PC-9 (cell line): ENCODE measurements at regions of chr2 and their contacts with region 1.

Region 1: DNA sequence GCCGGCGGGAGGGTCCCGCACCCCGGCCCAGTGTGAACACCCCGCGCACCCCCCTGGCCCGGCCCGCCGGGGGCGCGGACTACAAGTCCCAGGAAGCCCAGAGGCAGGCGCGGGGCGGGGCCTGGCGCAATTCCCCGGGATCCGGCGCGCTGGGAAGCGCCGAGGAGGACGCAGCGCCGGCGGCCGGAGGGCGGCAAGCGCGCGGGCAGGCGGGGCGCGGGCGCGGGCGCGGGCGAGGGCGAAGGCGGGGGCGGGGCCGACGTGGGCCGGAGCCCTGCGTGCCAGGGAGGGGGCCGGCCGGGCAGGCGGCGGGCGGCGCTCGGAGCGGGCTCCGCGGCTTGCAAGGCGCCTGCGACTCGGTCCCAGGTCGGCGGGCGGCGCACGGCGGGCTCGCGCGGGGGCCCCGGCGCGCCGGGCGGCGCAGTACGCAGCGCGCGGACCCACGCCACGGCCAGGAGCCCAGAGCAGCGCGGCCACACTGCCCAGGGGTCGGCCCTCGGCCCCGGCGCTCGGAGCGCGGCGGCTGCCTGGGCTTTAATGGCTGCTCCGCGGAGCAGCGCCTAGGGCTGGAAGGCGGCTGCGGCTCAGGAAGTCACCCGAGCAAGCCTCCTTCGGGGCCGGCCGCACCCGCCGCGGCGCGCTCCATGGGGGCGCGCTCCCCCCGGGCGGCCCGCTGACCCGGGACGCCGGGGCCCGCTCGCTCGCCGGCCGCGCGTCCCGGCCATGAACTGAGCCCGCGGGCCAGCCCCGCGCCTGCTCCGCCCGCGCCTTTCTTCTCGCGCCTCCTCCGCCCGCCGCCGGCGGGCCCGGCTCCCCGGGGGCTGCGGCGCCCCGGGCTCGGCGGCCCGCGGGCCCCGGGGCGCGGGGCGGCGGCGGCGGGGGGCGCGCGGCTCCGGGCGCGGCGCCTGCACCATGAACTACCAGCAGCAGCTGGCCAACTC is at the start of gene AGAP1:
- DNase-seq: peak; percentile 75 to 97
- H3K4me3 ChIP-seq: peak within 1 kb of the TSS; percentile 77
- H3K27ac ChIP-seq: peak within 1 kb of the TSS; percentile 69
- H3K4me1 ChIP-seq: peaks cover 20% of the 10 kb centered on the region
- H3K27me3 ChIP-seq: no peaks in the 10 kb centered on the region
- CTCF ChIP-seq: no peak
- total RNA-seq, gene AGAP1: 91.4 and 107 TPM in 2 replicates

Region 2: GRCh38 chr2:235135990-235136561 is 358.0 kb before region 1 on chr2:
- CTCF ChIA-PET with region 1: no interaction called
- POLR2A ChIA-PET with region 1: no interaction called
- intact Hi-C with region 1: loop called (anchors 1 kb)
- DNase-seq: peak; percentile 78 to 86
- H3K4me3 ChIP-seq: no peak overlapping the region
- H3K27ac ChIP-seq: no peak overlapping the region
- H3K4me1 ChIP-seq: no peaks in the 10 kb centered on the region
- H3K27me3 ChIP-seq: no peaks in the 10 kb centered on the region
- CTCF ChIP-seq: peak; percentile 94

Region 3: DNA sequence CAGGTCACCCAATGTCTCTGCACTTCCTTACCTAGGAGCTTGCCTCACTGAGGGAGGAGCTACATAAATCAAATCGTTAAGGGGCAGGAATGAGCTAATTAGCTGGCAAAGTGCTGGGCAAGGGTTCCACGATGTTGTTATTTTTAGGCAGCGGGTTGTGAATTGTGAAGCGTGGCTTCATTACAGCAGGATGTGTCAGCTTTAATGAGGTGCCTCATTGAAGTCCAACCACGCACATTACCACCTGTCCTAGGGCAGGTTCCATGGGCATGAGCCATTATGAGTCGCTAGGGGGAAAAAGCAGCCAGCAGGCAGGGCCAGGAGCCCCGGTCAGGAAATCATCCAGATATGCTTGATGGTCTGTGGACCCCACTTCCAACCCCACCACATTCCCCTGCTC is 127.2 kb before region 1 on chr2:
- CTCF ChIA-PET with region 1: interaction called, 5 read pairs
- POLR2A ChIA-PET with region 1: no interaction called
- intact Hi-C with region 1: loop called (anchors 10 kb)
- DNase-seq: peak in 1 of 2 experiments; percentile 56
- H3K4me3 ChIP-seq: no peak overlapping the region
- H3K27ac ChIP-seq: no peak overlapping the region
- H3K4me1 ChIP-seq: peaks cover 17% of the 10 kb centered on the region
- H3K27me3 ChIP-seq: peaks cover 3% of the 10 kb centered on the region; the same call in 1 of the 2 replicates
- CTCF ChIP-seq: no peak

Region 4: DNA sequence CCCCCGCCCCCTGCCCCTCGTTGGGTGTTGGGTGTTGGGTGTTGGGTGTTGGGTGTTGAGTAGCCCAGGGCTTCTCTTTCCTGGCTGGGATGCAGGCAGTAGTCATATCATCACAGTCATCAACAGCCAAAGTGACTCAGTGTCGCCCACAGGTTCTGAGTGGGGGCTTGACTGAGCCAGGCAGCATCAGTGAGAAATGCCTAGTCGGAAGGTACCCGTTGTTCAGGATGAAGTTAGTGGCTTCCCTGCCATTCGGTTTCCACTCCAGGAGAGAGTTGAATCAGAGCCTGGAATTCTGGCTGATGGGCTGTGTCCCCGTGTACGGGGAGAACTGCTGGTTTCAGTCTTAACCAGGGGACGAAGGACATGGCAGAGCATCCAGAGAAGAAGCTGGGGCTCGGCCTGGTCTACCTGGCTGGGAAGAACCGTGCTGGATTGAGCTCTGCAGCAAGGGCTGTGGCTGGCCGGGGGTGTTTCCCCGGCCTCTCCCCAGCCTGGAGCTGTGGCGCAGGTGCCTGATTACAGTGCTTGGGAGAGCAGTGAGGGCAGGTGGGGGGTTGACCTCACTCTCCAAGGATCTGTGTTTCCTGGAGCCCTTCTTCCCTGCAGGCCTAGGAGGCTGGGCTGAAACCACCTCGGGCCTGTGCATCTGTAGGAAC is 49.2 kb after region 1 on chr2:
- CTCF ChIA-PET with region 1: interaction called, 3 read pairs
- POLR2A ChIA-PET with region 1: no interaction called
- intact Hi-C with region 1: loop called (anchors 2 kb)
- DNase-seq: peak; percentile 71 to 79
- H3K4me3 ChIP-seq: peak overlapping the region; percentile 49; the same call in 1 of the 2 replicates
- H3K27ac ChIP-seq: peak overlapping the region; percentile 91
- H3K4me1 ChIP-seq: peaks cover 58% of the 10 kb centered on the region
- H3K27me3 ChIP-seq: no peaks in the 10 kb centered on the region
- CTCF ChIP-seq: no peak